ENCODE measurements at regions of chr2 and their contacts with region 1.

Region 1: GRCh38 chr2:199471443-199472057 is 13.8 kb upstream of the SATB2 start:
- DNase-seq: peak in 1 of 9 donors; percentile 46
- ATAC-seq: peak; percentile 58
- H3K4me3 ChIP-seq: no peak overlapping the region
- H3K4me3 Mint-ChIP-seq: peak overlapping the region in 2 of 10 donors; percentile 6 to 45
- H3K27ac ChIP-seq: no peak overlapping the region
- H3K27ac Mint-ChIP-seq: no peak overlapping the region
- H3K4me1 ChIP-seq: peaks cover 0 to 19% of the 10 kb centered on the region in 2 donors
- H3K4me1 Mint-ChIP-seq: peaks cover 3 to 49% (median 26%) of the 10 kb centered on the region in 7 donors
- H3K27me3 ChIP-seq: peaks cover 3 to 44% of the 10 kb centered on the region in 2 donors
- H3K27me3 Mint-ChIP-seq: peaks cover 82 to 90% (median 85%) of the 10 kb centered on the region in 5 donors

Region 2: DNA sequence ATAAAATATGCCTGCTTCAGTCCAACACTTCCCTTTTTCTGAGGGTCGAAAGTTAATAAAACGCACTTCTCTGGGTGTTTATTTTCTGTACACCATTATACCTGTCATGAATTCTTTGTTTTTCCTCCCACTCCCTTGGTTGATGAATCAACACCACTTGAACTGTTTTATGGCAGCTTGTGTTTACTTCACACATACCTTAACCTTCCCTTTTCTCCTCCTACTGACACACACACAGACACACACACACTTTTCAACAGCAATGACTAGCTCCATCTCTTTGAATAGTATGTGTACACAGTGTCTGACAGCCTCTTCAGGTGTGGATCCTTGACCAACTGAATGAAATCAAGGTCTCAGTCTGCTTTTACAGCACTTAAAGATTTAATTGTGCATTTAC is 105.1 kb before region 1 on chr2:
- CTCF ChIA-PET with region 1: no interaction called
- POLR2A ChIA-PET with region 1: no interaction called
- intact Hi-C with region 1: no loop called
- DNase-seq: no peak
- ATAC-seq: no peak
- H3K4me3 ChIP-seq: no peak overlapping the region
- H3K4me3 Mint-ChIP-seq: no peak overlapping the region
- H3K27ac ChIP-seq: no peak overlapping the region
- H3K27ac Mint-ChIP-seq: no peak overlapping the region
- H3K4me1 ChIP-seq: no peaks in the 10 kb centered on the region
- H3K4me1 Mint-ChIP-seq: no peaks in the 10 kb centered on the region
- H3K27me3 ChIP-seq: no peaks in the 10 kb centered on the region
- H3K27me3 Mint-ChIP-seq: peaks cover 6 to 45% (median 18%) of the 10 kb centered on the region in 5 donors

Region 3: GRCh38 chr2:199459286-199460016 is 12.1 kb before region 1 on chr2:
- CTCF ChIA-PET with region 1: no interaction called
- POLR2A ChIA-PET with region 1: interaction called, 3 read pairs
- intact Hi-C with region 1: loop called (anchors 1 to 2 kb)
- DNase-seq: peak in 8 of 9 donors; percentile 36 to 64 (median 48)
- ATAC-seq: peak; percentile 54
- H3K4me3 ChIP-seq: peak overlapping the region; percentile 94
- H3K4me3 Mint-ChIP-seq: peak overlapping the region; percentile 93 to 98 (median 94)
- H3K27ac ChIP-seq: peak overlapping the region; percentile 32
- H3K27ac Mint-ChIP-seq: peak overlapping the region; percentile 5 to 86 (median 73)
- H3K4me1 ChIP-seq: peaks cover 10 to 30% of the 10 kb centered on the region in 2 donors
- H3K4me1 Mint-ChIP-seq: peaks cover 6 to 44% (median 31%) of the 10 kb centered on the region in 7 donors
- H3K27me3 ChIP-seq: peaks cover 12 to 56% of the 10 kb centered on the region in 2 donors
- H3K27me3 Mint-ChIP-seq: peaks cover 44 to 77% (median 48%) of the 10 kb centered on the region in 5 donors

Measured in naive thymus-derived CD4-positive, alpha-beta T cell (primary cell).